BJ (cell line): ENCODE measurements at regions of chr19 and their contacts with region 1.

Region 1: DNA sequence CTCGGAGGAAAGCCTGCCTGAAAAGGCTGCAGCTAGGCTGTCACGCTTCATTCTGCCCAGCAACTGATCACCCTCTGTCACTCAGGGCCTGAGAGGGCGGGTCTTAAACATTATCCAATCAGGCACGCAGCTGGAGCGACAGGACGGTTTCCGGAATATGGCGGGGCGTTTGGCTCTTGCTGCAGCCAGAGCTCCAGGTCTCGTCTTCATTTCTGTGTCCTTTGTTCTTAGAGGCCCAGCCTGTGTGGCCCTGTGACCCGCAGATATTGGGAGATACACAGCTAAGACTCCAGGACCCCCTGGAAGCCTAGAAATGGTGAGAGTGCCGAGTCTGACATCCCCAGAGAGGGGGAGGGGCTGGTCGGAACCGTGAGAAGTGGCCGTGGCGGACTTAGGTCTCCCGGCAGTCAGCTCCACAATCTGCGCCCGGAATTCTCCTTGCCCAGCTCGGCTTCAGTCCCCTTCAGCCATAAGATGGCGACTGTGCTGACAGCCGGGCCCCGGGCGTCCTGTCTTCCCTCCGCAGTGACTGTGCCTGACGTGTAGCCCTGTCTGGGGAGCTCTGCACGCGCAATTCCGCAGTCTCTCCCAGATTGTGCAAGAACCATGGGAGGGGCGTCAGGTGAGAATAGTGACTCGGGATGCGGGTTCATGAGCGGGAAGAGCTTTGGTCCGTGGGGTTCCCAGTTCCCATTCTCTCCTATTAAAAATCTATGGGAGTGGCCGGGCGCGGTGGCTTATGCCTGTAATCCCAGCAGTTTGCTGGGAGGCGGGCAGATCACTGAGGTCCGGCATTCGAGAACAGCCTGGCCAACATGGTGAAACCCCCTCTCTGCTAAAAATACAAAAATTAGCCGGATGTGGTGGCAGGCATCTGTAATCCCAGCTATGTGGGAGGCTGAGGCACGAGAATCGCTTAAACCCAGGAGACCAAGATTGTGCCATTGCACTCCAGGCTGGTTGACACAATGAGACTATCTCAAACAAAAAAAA is at the start of gene ZNF429:
- DNase-seq: peak; percentile 64
- H3K4me3 ChIP-seq: peak within 1 kb of the TSS; percentile 74
- H3K27me3 ChIP-seq: no peaks in the 10 kb centered on the region
- CTCF ChIP-seq: no peak
- polyA plus RNA-seq, gene ZNF429: 3.3 and 4.1 TPM in 2 replicates

Region 2: GRCh38 chr19:21519488-21519887 is 13.7 kb after region 1 on chr19:
- CTCF ChIA-PET with region 1: no interaction called
- POLR2A ChIA-PET with region 1: interaction called, 13 read pairs
- DNase-seq: no peak
- H3K4me3 ChIP-seq: no peak overlapping the region
- H3K27me3 ChIP-seq: no peaks in the 10 kb centered on the region
- CTCF ChIP-seq: no peak